Body of pancreas (tissue), 4 donors: ENCODE measurements at regions of chr19 and their contacts with region 1.

Region 1: DNA sequence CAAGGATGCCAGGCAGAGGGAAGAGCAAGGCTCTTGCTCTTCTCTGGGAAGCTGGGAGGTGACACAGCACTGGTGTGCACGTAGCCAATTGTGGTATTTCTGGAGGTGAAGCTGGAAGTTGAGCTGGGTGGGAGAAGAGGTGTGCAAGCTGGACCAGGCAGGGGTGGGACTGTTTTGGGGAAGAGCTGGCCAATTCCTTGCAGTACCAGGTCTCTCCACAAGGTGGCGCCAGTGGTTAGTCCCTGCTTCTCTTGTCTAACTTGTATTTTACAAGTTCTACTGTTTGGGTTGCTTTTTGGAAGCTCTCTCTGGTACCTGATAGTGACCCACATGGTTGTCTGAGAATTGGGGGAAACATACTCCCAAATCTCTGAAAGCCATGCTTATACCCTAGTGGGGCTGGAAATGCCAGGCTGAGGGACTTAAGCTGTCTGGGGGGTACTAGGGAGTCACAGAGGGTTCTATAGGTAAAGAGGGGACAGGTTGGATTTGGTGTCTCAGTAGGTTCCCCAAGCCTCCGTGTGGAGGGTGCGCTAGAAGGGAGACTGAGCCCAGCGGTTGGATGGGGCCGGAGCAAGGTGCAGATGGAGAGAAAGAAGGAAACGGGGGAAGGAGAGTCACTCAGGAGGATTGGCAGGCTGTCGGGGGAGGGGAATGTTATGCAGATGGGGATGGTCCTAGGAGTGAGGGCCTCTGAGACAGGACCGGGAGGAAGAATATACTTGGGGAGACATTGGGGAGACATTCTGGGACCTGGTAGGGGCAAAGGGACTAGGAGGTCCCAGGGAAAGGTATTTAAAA is 3.0 kb downstream of the HPN start:
- DNase-seq: peak; percentile 58 to 76 (median 69)
- ATAC-seq: no peak
- H3K4me3 ChIP-seq: no peak overlapping the region
- H3K27ac ChIP-seq: peak overlapping the region in 3 of 4 donors; percentile 91 to 97 (median 97)
- H3K4me1 ChIP-seq: peaks cover 91% of the 10 kb centered on the region
- H3K27me3 ChIP-seq: no peaks in the 10 kb centered on the region
- CTCF ChIP-seq: peak; percentile 88 to 99 (median 94)
- POLR2A ChIP-seq: no peak

Region 2: GRCh38 chr19:35135389-35135909 is 90.9 kb after region 1 on chr19:
- intact Hi-C with region 1: loop called (anchors 10 kb)
- DNase-seq: peak; percentile 75 to 83 (median 78)
- ATAC-seq: peak; percentile 69
- H3K4me3 ChIP-seq: no peak overlapping the region
- H3K27ac ChIP-seq: no peak overlapping the region
- H3K4me1 ChIP-seq: peaks cover 30% of the 10 kb centered on the region
- H3K27me3 ChIP-seq: no peaks in the 10 kb centered on the region
- CTCF ChIP-seq: peak; percentile 82 to 92 (median 87)
- POLR2A ChIP-seq: no peak

Region 3: GRCh38 chr19:35380450-35381124 is 336.1 kb after region 1 on chr19:
- intact Hi-C with region 1: no loop called
- DNase-seq: peak in 3 of 4 donors; percentile 25 to 49 (median 44)
- ATAC-seq: peak; percentile 63
- H3K4me3 ChIP-seq: no peak overlapping the region
- H3K27ac ChIP-seq: no peak overlapping the region
- H3K4me1 ChIP-seq: peaks cover 7% of the 10 kb centered on the region
- H3K27me3 ChIP-seq: no peaks in the 10 kb centered on the region
- CTCF ChIP-seq: no peak
- POLR2A ChIP-seq: no peak